ENCODE measurements at regions of chr11 and their contacts with region 1.

Region 1: GRCh38 chr11:73177778-73178577 is 35.9 kb upstream of the FCHSD2 start:
- DNase-seq: peak; percentile 60 to 84 (median 65)
- H3K4me3 ChIP-seq: no peak overlapping the region
- H3K4me3 Mint-ChIP-seq: peak overlapping the region in 1 of 7 donors; percentile 61
- H3K27ac ChIP-seq: no peak overlapping the region
- H3K27ac Mint-ChIP-seq: peak overlapping the region in 1 of 8 donors; percentile 66
- H3K4me1 ChIP-seq: no peaks in the 10 kb centered on the region
- H3K4me1 Mint-ChIP-seq: peaks cover 0 to 6% (median 5%) of the 10 kb centered on the region in 3 donors
- H3K27me3 ChIP-seq: no peaks in the 10 kb centered on the region
- H3K27me3 Mint-ChIP-seq: peaks cover 1% of the 10 kb centered on the region in 2 donors

Region 2: DNA sequence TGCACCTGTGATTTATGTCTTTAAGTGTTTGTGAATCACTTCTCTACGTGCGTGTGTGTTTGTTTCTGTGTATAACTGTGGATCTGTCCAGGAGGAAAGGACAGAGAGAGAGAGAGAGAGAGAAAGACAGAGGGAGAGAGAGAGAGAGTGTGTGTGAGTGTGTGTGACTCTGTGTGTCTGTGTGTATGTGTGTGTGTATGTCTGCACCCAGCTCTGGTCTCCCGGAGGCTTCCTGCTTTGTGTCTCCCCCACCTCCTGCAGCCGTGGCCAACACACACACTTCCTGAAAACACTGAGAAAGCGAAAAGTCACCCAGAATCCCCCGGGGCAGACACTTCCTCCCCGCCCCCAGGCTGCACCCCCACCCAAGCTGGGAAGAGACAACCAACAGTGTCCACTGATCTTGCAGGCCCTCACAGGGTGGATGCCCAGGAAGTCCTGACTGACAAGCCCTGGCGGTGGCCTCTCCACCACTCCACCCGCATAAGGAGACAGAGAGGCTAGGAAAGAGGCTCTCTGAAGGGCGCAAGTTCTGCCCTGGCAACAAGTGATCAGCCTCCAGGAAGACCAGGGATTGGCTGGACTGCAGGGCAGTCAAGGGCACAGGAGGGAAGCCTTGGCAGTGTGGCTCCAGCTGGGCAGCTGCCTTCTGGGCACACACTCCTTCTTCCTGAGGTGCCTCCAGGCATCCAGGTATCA is 455.8 kb before region 1 on chr11:
- CTCF ChIA-PET with region 1: interaction called, 42 read pairs
- POLR2A ChIA-PET with region 1: no interaction called
- DNase-seq: peak; percentile 75 to 92 (median 87)
- H3K4me3 ChIP-seq: peak overlapping the region; percentile 81
- H3K4me3 Mint-ChIP-seq: peak overlapping the region; percentile 89 to 95 (median 92)
- H3K27ac ChIP-seq: peak overlapping the region; percentile 84
- H3K27ac Mint-ChIP-seq: peak overlapping the region; percentile 87 to 99 (median 96)
- H3K4me1 ChIP-seq: peaks cover 53% of the 10 kb centered on the region
- H3K4me1 Mint-ChIP-seq: peaks cover 57 to 86% (median 62%) of the 10 kb centered on the region in 3 donors
- H3K27me3 ChIP-seq: no peaks in the 10 kb centered on the region
- H3K27me3 Mint-ChIP-seq: peaks cover 0 to 9% of the 10 kb centered on the region in 2 donors

Region 3: DNA sequence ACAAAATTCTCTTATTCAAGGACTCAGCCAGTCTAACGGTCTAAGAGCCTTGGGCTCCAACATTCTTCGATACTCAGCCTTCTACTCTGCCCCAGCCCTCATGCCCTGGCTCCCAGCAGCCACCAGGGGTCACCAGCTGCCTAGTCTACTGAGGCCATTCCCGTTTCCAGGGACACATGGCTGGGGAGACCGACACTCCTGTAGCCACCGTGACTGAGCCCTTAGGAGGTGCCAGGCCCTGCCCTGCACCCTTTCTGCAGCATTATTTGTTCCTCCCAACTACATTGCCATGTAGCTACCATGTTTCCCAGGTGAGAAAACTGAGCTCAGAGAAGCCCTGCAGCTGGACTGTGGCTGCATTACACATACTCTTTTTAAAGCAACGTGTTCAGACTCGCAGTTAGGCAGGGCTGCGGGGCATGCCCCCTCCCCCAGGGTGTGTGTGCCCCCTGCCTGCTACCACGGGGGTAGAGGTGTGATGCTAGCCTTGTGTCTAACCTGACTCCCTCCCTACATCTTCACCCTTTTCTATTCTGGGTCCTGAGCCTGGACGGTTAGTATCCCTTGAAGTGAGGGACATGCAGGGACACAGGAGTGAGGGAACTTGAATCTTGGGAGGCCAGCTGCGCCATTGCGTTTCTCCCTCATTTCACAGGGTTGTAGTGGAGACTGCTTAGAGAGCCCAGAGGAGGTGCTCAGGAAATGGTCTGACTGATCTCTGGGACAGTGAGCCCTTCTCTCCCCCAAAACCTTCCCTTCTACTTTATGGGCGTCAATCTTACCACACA is 346.3 kb before region 1 on chr11:
- CTCF ChIA-PET with region 1: interaction called, 51 read pairs
- POLR2A ChIA-PET with region 1: no interaction called
- DNase-seq: peak; percentile 28 to 60 (median 41)
- H3K4me3 ChIP-seq: no peak overlapping the region
- H3K4me3 Mint-ChIP-seq: no peak overlapping the region
- H3K27ac ChIP-seq: no peak overlapping the region
- H3K27ac Mint-ChIP-seq: peak overlapping the region; percentile 59 to 95 (median 76)
- H3K4me1 ChIP-seq: peaks cover 6% of the 10 kb centered on the region
- H3K4me1 Mint-ChIP-seq: peaks cover 7 to 33% (median 13%) of the 10 kb centered on the region in 3 donors
- H3K27me3 ChIP-seq: no peaks in the 10 kb centered on the region
- H3K27me3 Mint-ChIP-seq: peaks cover 0 to 1% of the 10 kb centered on the region in 2 donors

Region 4: GRCh38 chr11:73141848-73142286 is 36.1 kb before region 1 on chr11:
- CTCF ChIA-PET with region 1: interaction called, 16 read pairs
- POLR2A ChIA-PET with region 1: interaction called, 8 read pairs
- DNase-seq: peak in 4 of 5 donors; percentile 52 to 75 (median 62)
- H3K4me3 ChIP-seq: peak overlapping the region; percentile 85
- H3K4me3 Mint-ChIP-seq: peak overlapping the region; percentile 86 to 99 (median 96)
- H3K27ac ChIP-seq: peak overlapping the region; percentile 88
- H3K27ac Mint-ChIP-seq: peak overlapping the region; percentile 87 to 97 (median 95)
- H3K4me1 ChIP-seq: peaks cover 32% of the 10 kb centered on the region
- H3K4me1 Mint-ChIP-seq: peaks cover 43 to 57% (median 55%) of the 10 kb centered on the region in 3 donors
- H3K27me3 ChIP-seq: no peaks in the 10 kb centered on the region
- H3K27me3 Mint-ChIP-seq: peaks cover 0 to 7% of the 10 kb centered on the region in 2 donors

Region 5: GRCh38 chr11:73164803-73165540 is 13.0 kb before region 1 on chr11:
- CTCF ChIA-PET with region 1: interaction called, 18 read pairs
- POLR2A ChIA-PET with region 1: no interaction called
- DNase-seq: no peak
- H3K4me3 ChIP-seq: no peak overlapping the region
- H3K4me3 Mint-ChIP-seq: no peak overlapping the region
- H3K27ac ChIP-seq: no peak overlapping the region
- H3K27ac Mint-ChIP-seq: no peak overlapping the region
- H3K4me1 ChIP-seq: no peaks in the 10 kb centered on the region
- H3K4me1 Mint-ChIP-seq: no peaks in the 10 kb centered on the region
- H3K27me3 ChIP-seq: no peaks in the 10 kb centered on the region
- H3K27me3 Mint-ChIP-seq: peaks cover 8 to 16% of the 10 kb centered on the region in 2 donors

Region 6: GRCh38 chr11:73206801-73207200 is 28.8 kb after region 1 on chr11:
- CTCF ChIA-PET with region 1: no interaction called
- POLR2A ChIA-PET with region 1: no interaction called
- DNase-seq: no peak
- H3K4me3 ChIP-seq: no peak overlapping the region
- H3K4me3 Mint-ChIP-seq: no peak overlapping the region
- H3K27ac ChIP-seq: no peak overlapping the region
- H3K27ac Mint-ChIP-seq: no peak overlapping the region
- H3K4me1 ChIP-seq: no peaks in the 10 kb centered on the region
- H3K4me1 Mint-ChIP-seq: no peaks in the 10 kb centered on the region
- H3K27me3 ChIP-seq: no peaks in the 10 kb centered on the region
- H3K27me3 Mint-ChIP-seq: peaks cover 9 to 27% of the 10 kb centered on the region in 2 donors